Panc1 (cell line): ENCODE measurements at regions of chr19 and their contacts with region 1.

Region 1: DNA sequence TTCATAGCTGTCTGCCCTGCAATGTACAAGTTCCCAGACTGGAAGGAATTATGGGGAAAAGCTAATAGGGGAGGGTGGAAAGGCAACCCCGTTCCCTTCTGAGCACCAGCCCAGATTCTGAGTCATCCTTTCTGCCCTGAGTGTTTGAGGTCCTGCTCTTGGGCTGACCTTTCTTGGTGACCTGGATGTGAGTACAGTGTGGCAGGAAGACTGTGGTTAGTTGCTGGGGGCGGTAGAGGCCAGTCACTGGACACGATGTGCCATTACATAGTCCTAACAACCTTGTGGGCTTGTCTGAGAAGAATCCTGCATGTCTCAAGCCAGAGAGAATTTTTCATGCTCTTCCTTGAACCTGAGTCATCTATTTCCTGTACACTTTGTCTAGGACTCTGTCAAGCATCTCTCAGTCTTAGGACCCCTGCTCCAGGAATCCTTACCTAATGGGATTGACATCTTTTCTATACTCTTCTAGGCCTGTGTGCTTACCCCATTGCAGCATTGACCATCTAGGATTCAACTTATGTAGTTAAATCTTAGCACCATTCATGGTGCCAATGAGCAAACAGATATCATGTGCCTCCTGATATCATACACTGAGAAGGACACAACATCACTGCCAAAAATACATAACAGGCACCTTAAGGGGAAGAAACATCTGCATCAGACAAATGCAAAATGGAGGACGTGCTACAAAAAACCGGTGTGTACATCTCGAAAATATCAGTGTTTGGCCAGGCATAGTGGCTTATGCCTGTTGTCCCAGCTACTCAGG is 8.1 kb upstream of the ANGPTL4 start:
- DNase-seq: peak; percentile 88
- ATAC-seq: peak; percentile 89
- H3K4me3 ChIP-seq: no peak overlapping the region
- H3K27ac ChIP-seq: peak overlapping the region; percentile 56
- H3K4me1 ChIP-seq: 0 out of 2 replicates have a peak, but pooled peaks cover 4% of the 10 kb centered on the region
- H3K27me3 ChIP-seq: no peaks in the 10 kb centered on the region
- CTCF ChIP-seq: no peak

Region 2: GRCh38 chr19:8221161-8221560 is 134.7 kb before region 1 on chr19:
- CTCF ChIA-PET with region 1: no interaction called
- POLR2A ChIA-PET with region 1: no interaction called
- in situ Hi-C with region 1: no loop called
- intact Hi-C with region 1: no loop called
- DNase-seq: no peak
- ATAC-seq: no peak
- H3K4me3 ChIP-seq: no peak overlapping the region
- H3K27ac ChIP-seq: no peak overlapping the region
- H3K4me1 ChIP-seq: no peaks in the 10 kb centered on the region
- H3K27me3 ChIP-seq: no peaks in the 10 kb centered on the region
- CTCF ChIP-seq: no peak

Region 3: DNA sequence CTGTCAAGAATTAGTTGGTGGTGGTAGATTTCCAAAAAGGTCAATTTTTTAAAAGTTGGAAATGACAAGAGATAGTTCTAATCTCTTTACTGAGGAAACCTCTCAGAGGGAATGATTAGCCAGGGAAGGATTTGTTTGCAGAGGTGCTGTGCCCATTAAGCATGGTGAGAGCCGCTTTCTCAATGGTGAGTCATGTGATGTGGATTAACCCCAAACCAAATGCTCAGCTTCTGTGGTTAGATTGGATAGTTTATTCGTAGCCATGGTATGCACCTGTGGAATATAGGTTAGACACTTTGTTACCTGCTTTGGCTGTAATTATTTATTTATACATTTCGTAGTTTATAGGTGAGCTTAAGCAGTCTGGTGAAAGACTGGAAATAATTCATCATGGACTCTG is 96.1 kb after region 1 on chr19:
- CTCF ChIA-PET with region 1: no interaction called
- POLR2A ChIA-PET with region 1: interaction called, 7 read pairs
- in situ Hi-C with region 1: no loop called
- intact Hi-C with region 1: loop called (anchors 10 kb)
- DNase-seq: no peak
- ATAC-seq: peak; percentile 68
- H3K4me3 ChIP-seq: no peak overlapping the region
- H3K27ac ChIP-seq: no peak overlapping the region; the same call in 1 of the 2 replicates
- H3K4me1 ChIP-seq: peaks cover 61% of the 10 kb centered on the region
- H3K27me3 ChIP-seq: no peaks in the 10 kb centered on the region
- CTCF ChIP-seq: no peak

Region 4: GRCh38 chr19:8513687-8514504 is 158.1 kb after region 1 on chr19 and contains the start of gene ZNF414:
- CTCF ChIA-PET with region 1: no interaction called
- POLR2A ChIA-PET with region 1: no interaction called
- in situ Hi-C with region 1: no loop called
- intact Hi-C with region 1: no loop called
- DNase-seq: peak; percentile 62
- ATAC-seq: peak; percentile 97
- H3K4me3 ChIP-seq: peak within 1 kb of the TSS; percentile 55 to 67
- H3K27ac ChIP-seq: peak within 1 kb of the TSS; percentile 91
- H3K4me1 ChIP-seq: peaks cover 9% of the 10 kb centered on the region
- H3K27me3 ChIP-seq: no peaks in the 10 kb centered on the region
- CTCF ChIP-seq: no peak
- total RNA-seq, gene ZNF414: 37.1 TPM